HepG2 (cell line): ENCODE measurements at regions of chr21 and their contacts with region 1.

Region 1: GRCh38 chr21:36859744-36860501 is 106.5 kb downstream of the HLCS start:
- DNase-seq: peak; percentile 81
- ATAC-seq: peak; percentile 89
- H3K4me3 ChIP-seq: peak overlapping the region in 2 of 3 experiments; percentile 43 to 48; a peak in 2 of 6 replicates
- H3K27ac ChIP-seq: peak overlapping the region; percentile 75
- H3K4me1 ChIP-seq: peaks cover 76% of the 10 kb centered on the region
- H3K27me3 ChIP-seq: no peaks in the 10 kb centered on the region
- CTCF ChIP-seq: no peak
- EP300 ChIP-seq: peak; percentile 69 to 85; a peak in 3 of 4 replicates
- POLR2A ChIP-seq: peak in 1 of 2 experiments; percentile 62; a peak in 2 of 4 replicates
- RAD21 ChIP-seq: no peak

Region 2: DNA sequence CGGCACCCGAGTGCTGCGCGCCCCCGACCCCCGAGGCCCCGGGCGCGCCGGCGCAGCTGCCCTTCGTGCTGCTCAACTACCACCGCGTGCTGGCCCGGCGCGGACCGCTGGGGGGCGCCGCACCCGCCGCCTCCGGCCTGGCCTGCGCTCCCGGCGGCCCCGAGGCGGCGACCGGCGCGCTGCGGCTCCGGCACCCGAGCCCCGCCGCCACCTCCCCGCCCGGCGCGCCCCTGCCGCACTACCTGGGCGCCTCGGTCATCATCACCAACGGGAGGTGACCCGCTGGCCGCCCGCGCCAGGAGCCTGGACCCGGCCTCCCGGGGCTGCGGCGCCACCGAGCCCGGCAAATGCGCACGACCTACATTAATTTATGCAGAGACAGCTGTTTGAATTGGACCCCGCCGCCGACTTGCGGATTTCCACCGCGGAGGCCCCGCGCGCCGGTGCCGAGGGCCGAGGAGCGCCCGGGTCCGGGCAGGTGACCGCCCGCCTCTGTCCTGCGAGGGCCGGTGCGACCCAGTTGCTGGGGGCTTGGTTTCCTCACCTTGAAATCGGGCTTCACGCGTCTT is 112.0 kb before region 1 on chr21:
- CTCF ChIA-PET with region 1: no interaction called
- POLR2A ChIA-PET with region 1: no interaction called
- in situ Hi-C with region 1: no loop called
- intact Hi-C with region 1: loop called (anchors 5 kb)
- DNase-seq: peak; percentile 23
- ATAC-seq: peak; percentile 87
- H3K4me3 ChIP-seq: peak overlapping the region; percentile 60 to 73 (median 68); a peak in 5 of 6 replicates
- H3K27ac ChIP-seq: no peak overlapping the region
- H3K4me1 ChIP-seq: peaks cover 12% of the 10 kb centered on the region
- H3K27me3 ChIP-seq: no peaks in the 10 kb centered on the region
- CTCF ChIP-seq: peak; percentile 34; the same call in 1 of the 2 replicates
- EP300 ChIP-seq: no peak
- POLR2A ChIP-seq: no peak
- RAD21 ChIP-seq: peak; percentile 38; the same call in 1 of the 2 replicates

Region 3: GRCh38 chr21:36917471-36918158 is 57.7 kb after region 1 on chr21:
- CTCF ChIA-PET with region 1: no interaction called
- POLR2A ChIA-PET with region 1: interaction called, 14 read pairs
- in situ Hi-C with region 1: no loop called
- intact Hi-C with region 1: loop called (anchors 5 kb)
- DNase-seq: peak; percentile 55
- ATAC-seq: peak; percentile 84
- H3K4me3 ChIP-seq: no peak overlapping the region
- H3K27ac ChIP-seq: peak overlapping the region; percentile 55
- H3K4me1 ChIP-seq: peaks cover 50% of the 10 kb centered on the region
- H3K27me3 ChIP-seq: no peaks in the 10 kb centered on the region
- CTCF ChIP-seq: peak; percentile 83
- EP300 ChIP-seq: no peak
- POLR2A ChIP-seq: no peak
- RAD21 ChIP-seq: peak; percentile 46; the same call in 1 of the 2 replicates